ENCODE measurements at regions of chr12 and their contacts with region 1.

Region 1: DNA sequence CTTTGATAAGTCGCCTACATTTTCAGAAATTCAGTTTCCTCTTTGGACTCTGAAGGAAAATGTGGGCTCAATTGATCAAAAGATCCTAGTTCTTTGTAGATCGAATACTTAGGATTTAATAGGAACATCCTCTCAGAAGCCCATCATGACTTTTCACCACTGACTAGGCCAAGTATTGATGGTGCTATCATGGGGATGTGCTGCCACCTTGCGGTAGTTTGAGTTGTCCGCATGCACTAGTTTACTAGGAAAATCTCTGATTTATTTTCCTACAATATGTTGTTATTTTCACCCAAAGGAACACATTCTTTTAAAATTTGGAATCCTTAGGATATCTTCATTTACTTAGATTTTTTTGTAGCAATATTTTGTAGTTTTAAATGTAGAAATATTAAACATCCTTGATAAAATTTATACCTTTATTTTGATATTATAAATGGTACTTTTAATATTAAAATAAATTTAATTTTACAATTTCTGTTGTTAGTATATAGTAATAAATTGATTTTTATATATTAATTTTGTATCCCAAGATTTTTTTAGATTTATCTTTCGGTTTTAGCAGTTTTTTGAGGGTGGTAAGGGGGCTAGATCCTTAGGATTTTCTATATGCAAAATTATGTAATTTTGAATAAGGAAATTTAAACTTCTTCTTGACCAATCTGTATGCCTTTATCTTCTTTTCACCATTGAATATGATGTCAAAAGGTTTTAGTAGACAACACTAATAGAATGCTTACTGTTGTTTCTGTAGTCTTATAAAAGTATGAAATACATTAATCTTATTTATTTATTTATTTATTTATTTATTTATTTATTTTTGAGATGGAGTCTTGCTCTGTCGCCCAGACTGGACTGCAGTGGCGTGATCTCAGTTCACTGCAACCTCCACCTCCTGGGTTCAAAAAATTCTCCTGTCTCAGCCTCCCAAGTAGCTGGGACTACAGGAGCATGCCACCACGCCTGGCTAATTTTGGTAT is 52.9 kb upstream of the OR9K2 start:
- DNase-seq: peak; percentile 92
- H3K4me3 Mint-ChIP-seq: no peak overlapping the region
- H3K27ac Mint-ChIP-seq: no peak overlapping the region
- H3K4me1 Mint-ChIP-seq: peaks cover 9% of the 10 kb centered on the region
- H3K27me3 Mint-ChIP-seq: peaks cover 31% of the 10 kb centered on the region

Region 2: GRCh38 chr12:54603173-54603814 is 470.0 kb before region 1 on chr12:
- intact Hi-C with region 1: loop called (anchors 1 kb)
- DNase-seq: peak; percentile 88
- H3K4me3 Mint-ChIP-seq: no peak overlapping the region
- H3K27ac Mint-ChIP-seq: no peak overlapping the region
- H3K4me1 Mint-ChIP-seq: peaks cover 2% of the 10 kb centered on the region
- H3K27me3 Mint-ChIP-seq: peaks cover 21% of the 10 kb centered on the region

Region 3: GRCh38 chr12:54701940-54702592 is 371.3 kb before region 1 on chr12:
- intact Hi-C with region 1: loop called (anchors 1 kb)
- DNase-seq: peak; percentile 79
- H3K4me3 Mint-ChIP-seq: no peak overlapping the region
- H3K27ac Mint-ChIP-seq: no peak overlapping the region
- H3K4me1 Mint-ChIP-seq: no peaks in the 10 kb centered on the region
- H3K27me3 Mint-ChIP-seq: peaks cover 20% of the 10 kb centered on the region

Region 4: GRCh38 chr12:54749191-54749818 is 324.0 kb before region 1 on chr12:
- intact Hi-C with region 1: loop called (anchors 1 kb)
- DNase-seq: peak; percentile 84
- H3K4me3 Mint-ChIP-seq: peak overlapping the region; percentile 41
- H3K27ac Mint-ChIP-seq: no peak overlapping the region
- H3K4me1 Mint-ChIP-seq: peaks cover 16% of the 10 kb centered on the region
- H3K27me3 Mint-ChIP-seq: peaks cover 20% of the 10 kb centered on the region

Region 5: DNA sequence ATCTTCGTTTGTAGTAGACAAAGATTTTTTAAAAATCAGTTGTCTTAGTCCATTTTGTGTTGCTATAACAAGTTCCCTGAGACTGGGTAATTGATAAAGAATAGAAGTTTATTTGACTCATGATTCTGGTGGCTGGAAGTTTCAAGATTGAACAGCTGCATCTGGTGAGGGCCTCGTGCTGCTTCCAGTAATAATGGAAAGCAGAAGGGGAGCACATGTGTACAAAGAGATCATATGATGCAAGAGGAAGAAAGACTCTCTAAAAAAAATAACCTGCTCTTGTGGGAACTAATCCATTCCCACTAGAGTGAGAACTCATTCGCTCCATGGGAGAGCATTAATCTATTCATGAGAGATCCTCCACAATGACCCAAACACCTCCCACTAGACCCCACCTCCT is 194.2 kb before region 1 on chr12:
- intact Hi-C with region 1: no loop called
- DNase-seq: no peak
- H3K4me3 Mint-ChIP-seq: no peak overlapping the region
- H3K27ac Mint-ChIP-seq: no peak overlapping the region
- H3K4me1 Mint-ChIP-seq: peaks cover 4% of the 10 kb centered on the region
- H3K27me3 Mint-ChIP-seq: peaks cover 20% of the 10 kb centered on the region

Region 6: GRCh38 chr12:54993161-54993835 is 80.0 kb before region 1 on chr12:
- intact Hi-C with region 1: loop called (anchors 1 kb)
- DNase-seq: peak; percentile 87
- H3K4me3 Mint-ChIP-seq: no peak overlapping the region
- H3K27ac Mint-ChIP-seq: no peak overlapping the region
- H3K4me1 Mint-ChIP-seq: peaks cover 36% of the 10 kb centered on the region
- H3K27me3 Mint-ChIP-seq: no peaks in the 10 kb centered on the region

Region 7: DNA sequence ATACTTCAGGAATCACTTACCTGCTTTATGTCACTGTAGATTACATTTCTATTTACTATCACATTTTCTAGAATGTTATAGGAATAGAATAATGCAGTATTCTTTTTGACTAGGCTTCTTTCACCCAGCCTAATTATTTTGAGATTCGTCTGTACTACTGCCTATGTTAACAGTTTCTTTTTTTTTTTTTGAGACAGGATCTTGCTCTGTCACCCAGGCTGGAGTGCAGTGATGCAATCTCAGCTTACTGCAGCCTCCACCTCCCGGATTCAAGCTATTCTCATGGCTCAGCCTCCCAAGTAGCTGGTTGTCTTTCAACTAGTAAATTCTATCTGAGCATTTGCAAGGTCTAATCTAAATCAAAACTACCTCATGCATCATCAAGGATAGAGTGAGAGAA is 216.7 kb after region 1 on chr12:
- intact Hi-C with region 1: no loop called
- DNase-seq: no peak
- H3K4me3 Mint-ChIP-seq: no peak overlapping the region
- H3K27ac Mint-ChIP-seq: no peak overlapping the region
- H3K4me1 Mint-ChIP-seq: no peaks in the 10 kb centered on the region
- H3K27me3 Mint-ChIP-seq: no peaks in the 10 kb centered on the region

Region 8: GRCh38 chr12:56408799-56409417 is 1335.6 kb after region 1 on chr12:
- intact Hi-C with region 1: no loop called
- DNase-seq: no peak
- H3K4me3 Mint-ChIP-seq: no peak overlapping the region
- H3K27ac Mint-ChIP-seq: no peak overlapping the region
- H3K4me1 Mint-ChIP-seq: no peaks in the 10 kb centered on the region
- H3K27me3 Mint-ChIP-seq: no peaks in the 10 kb centered on the region